ENCODE measurements at regions of chr12 and their contacts with region 1.

Region 1: GRCh38 chr12:32455607-32456071 is 56.3 kb downstream of the FGD4 start:
- DNase-seq: peak in 2 of 5 donors; percentile 28 to 38
- ATAC-seq: peak in 3 of 4 donors; percentile 49 to 78 (median 60)
- H3K4me3 ChIP-seq: peak overlapping the region in 10 of 12 donors; percentile 17 to 58 (median 44)
- H3K27ac ChIP-seq: peak overlapping the region; percentile 22 to 75 (median 57)
- H3K4me1 ChIP-seq: peaks cover 7 to 61% (median 44%) of the 10 kb centered on the region in 12 donors
- H3K27me3 ChIP-seq: no peaks in the 10 kb centered on the region
- CTCF ChIP-seq: peak; percentile 49 to 85 (median 70)
- POLR2A ChIP-seq: no peak

Region 2: GRCh38 chr12:32365473-32366064 is 90.1 kb before region 1 on chr12:
- intact Hi-C with region 1: loop called in 3 of 10 experiments (anchors 5 kb)
- DNase-seq: peak in 3 of 5 donors; percentile 36 to 51 (median 42)
- ATAC-seq: peak in 3 of 4 donors; percentile 70 to 77 (median 76)
- H3K4me3 ChIP-seq: no peak overlapping the region
- H3K27ac ChIP-seq: no peak overlapping the region
- H3K4me1 ChIP-seq: peaks cover 0 to 6% (median 0%) of the 10 kb centered on the region in 12 donors
- H3K27me3 ChIP-seq: no peaks in the 10 kb centered on the region
- CTCF ChIP-seq: peak; percentile 70 to 91 (median 82)
- POLR2A ChIP-seq: no peak

Region 3: DNA sequence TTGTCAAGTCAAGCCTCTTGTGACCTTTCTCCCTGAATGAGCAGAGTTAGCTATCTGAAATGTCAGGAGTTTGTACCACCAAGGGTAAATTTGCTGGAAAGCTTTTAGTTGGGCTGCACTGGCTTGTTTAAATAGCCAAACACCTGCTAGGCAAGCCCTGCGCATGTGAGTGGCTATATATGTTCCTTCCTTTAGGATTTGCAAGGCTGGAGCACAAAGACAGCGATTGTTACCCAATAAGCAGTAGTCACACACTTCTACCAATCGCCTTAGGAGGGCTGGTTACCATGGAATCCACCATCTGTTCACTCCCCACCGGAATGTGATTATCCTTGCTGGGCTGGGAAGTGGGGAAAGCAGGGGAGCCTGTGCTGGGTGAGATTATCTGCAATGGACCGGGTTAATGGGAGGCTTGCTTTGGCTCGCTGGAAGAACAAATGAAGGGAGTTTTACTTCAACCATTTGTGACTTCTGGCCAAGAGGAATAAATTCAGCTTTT is 46.2 kb after region 1 on chr12:
- intact Hi-C with region 1: loop called in 2 of 10 experiments (anchors 5 kb)
- DNase-seq: peak in 3 of 5 donors; percentile 22 to 42 (median 36)
- ATAC-seq: peak; percentile 29 to 71 (median 60)
- H3K4me3 ChIP-seq: peak overlapping the region in 10 of 12 donors; percentile 4 to 60 (median 41)
- H3K27ac ChIP-seq: peak overlapping the region in 10 of 12 donors; percentile 36 to 85 (median 68)
- H3K4me1 ChIP-seq: peaks cover 7 to 88% (median 53%) of the 10 kb centered on the region in 12 donors
- H3K27me3 ChIP-seq: no peaks in the 10 kb centered on the region
- CTCF ChIP-seq: no peak
- POLR2A ChIP-seq: no peak

Region 4: GRCh38 chr12:32548691-32549281 is 93.1 kb after region 1 on chr12:
- intact Hi-C with region 1: loop called in 2 of 10 experiments (anchors 5 to 10 kb)
- DNase-seq: peak in 4 of 5 donors; percentile 30 to 62 (median 46)
- ATAC-seq: peak; percentile 55 to 68 (median 62)
- H3K4me3 ChIP-seq: peak overlapping the region in 4 of 12 donors; percentile 2 to 22 (median 6)
- H3K27ac ChIP-seq: peak overlapping the region; percentile 60 to 89 (median 78)
- H3K4me1 ChIP-seq: peaks cover 9 to 85% (median 57%) of the 10 kb centered on the region in 12 donors
- H3K27me3 ChIP-seq: no peaks in the 10 kb centered on the region
- CTCF ChIP-seq: no peak
- POLR2A ChIP-seq: no peak

Region 5: DNA sequence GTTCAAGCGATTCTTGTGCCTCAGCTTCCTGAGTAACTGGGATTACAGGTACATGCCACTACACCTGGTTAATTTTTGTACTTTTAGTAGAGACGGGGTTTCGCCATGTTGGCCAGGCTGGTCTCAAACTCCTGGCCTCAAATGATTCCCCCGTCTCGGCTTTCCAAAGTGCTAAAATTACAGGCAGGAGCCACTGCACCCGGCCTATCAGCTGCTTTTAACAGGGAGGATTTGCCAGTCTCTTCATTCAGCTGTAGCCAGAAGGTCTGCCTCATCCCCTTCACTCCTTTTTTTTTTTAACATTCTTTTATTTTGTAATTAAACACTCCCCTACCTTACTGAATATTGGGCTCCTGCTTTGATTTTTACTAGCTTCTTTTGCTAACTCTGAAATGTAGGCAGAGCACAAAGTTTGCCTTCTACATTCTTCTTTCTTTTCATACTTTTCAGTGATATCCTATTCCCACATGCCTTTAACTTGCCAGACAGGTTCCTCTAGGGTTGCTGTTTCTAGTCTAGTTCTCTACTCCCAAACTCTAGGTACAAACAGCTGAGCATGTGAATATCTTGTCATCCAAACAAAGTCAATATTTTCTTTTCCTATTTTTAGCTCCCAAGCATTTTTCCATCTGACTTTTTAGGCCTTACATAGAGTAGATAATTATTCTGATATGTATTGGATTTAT is 149.5 kb after region 1 on chr12:
- intact Hi-C with region 1: loop called in 2 of 10 experiments (anchors 5 kb)
- DNase-seq: no peak
- ATAC-seq: no peak
- H3K4me3 ChIP-seq: no peak overlapping the region
- H3K27ac ChIP-seq: no peak overlapping the region
- H3K4me1 ChIP-seq: peaks cover 0 to 25% (median 5%) of the 10 kb centered on the region in 12 donors
- H3K27me3 ChIP-seq: no peaks in the 10 kb centered on the region
- CTCF ChIP-seq: no peak
- POLR2A ChIP-seq: no peak

Region 6: GRCh38 chr12:32671930-32672780 is 216.5 kb after region 1 on chr12:
- intact Hi-C with region 1: loop called in 5 of 10 experiments (anchors 2 to 5 kb)
- DNase-seq: peak in 2 of 5 donors; percentile 53 to 55
- ATAC-seq: peak; percentile 50 to 91 (median 84)
- H3K4me3 ChIP-seq: no peak overlapping the region
- H3K27ac ChIP-seq: no peak overlapping the region
- H3K4me1 ChIP-seq: peaks cover 0 to 10% (median 0%) of the 10 kb centered on the region in 12 donors
- H3K27me3 ChIP-seq: no peaks in the 10 kb centered on the region
- CTCF ChIP-seq: peak; percentile 34 to 79 (median 61)
- POLR2A ChIP-seq: no peak

Region 7: DNA sequence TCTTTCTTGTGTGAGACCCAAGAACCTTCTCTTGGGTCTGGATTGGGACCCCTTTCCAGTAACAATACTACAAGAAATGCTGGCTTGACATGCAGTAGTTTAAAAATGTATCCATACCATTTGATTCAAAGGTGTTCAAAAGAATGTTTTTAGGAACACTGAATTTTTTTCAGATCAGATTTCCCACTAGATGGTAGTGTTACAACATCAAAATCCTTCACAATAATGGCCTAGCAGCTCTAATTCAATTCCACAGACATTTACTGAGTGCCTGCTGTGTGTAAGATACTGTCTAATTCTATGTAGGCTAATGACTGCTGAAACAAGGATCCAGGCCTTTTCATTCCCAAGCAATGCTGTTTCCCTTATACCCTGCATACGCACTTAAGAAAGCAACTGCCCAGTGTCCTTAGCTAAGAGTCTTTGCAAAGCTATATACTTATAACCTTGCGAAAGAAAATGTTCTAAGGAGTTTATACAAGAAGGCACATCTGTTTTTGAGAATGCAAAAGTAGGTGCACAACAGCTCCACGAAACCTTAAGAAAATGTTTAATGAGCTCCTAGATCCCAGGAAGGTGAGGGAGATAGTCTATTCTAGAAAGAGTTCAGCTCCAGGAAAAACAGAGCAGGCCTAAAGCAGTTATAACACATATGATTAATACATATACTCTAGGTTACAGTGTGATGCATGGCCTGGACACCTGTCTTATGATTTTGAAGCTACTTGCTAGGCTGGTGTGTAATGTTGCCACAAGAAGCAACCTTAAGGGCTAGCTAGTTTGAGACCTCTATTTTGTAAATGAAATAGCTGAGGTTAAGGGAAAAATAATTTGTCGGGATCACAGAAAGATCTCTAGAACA is 491.8 kb after region 1 on chr12:
- intact Hi-C with region 1: no loop called
- DNase-seq: no peak
- ATAC-seq: no peak
- H3K4me3 ChIP-seq: no peak overlapping the region
- H3K27ac ChIP-seq: no peak overlapping the region
- H3K4me1 ChIP-seq: no peaks in the 10 kb centered on the region
- H3K27me3 ChIP-seq: peaks cover 0 to 5% (median 0%) of the 10 kb centered on the region in 9 donors
- CTCF ChIP-seq: peak in 1 of 12 donors; percentile 22
- POLR2A ChIP-seq: no peak

Measured in heart left ventricle (tissue), 16 donors.